ENCODE measurements at regions of chr22 and their contacts with region 1.

Region 1: DNA sequence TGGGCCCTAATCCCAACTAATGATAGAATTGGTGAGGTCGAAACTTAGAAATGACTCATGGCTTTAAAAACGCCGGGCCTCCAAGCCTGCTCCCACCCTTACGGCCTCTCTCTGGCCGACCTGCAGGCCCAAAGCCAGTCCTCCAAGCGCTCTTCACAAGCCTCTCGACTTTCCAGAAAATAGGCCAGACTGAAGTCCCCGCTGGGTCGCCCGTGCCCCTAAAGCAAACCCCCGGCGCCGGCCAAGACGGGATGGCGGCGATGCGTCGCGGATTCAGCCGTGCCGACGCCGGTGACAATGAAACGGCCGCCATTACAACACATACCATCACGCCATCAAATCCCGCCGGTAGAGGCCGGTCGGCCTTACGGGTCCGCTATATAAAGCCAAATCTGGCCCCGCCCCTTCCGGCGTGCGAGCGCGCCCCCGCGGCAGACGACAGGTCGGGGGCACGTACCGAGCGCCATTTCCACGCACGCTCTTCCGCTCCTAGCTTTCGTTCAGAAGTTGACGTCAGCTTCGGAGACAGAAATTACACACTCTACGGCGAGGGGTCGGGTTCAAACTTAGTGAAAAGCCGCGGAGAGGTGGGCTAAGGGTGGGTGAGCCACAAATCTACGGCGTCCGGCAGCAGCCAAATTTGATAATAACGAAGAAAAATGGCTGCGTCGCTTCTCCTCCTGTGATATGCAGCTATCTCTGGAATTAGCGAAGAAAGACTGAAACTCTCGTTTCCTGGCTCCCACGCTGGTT is at the start of gene RPL3:
- DNase-seq: peak; percentile 91
- H3K4me3 ChIP-seq: peak within 1 kb of the TSS; percentile 89
- CTCF ChIP-seq: no peak

Region 2: GRCh38 chr22:39135090-39135896 is 184.2 kb before region 1 on chr22:
- CTCF ChIA-PET with region 1: interaction called, 15 read pairs
- POLR2A ChIA-PET with region 1: interaction called, 3 read pairs
- DNase-seq: no peak
- H3K4me3 ChIP-seq: no peak overlapping the region
- CTCF ChIP-seq: peak; percentile 82

Region 3: GRCh38 chr22:39155421-39155820 is 164.0 kb before region 1 on chr22:
- CTCF ChIA-PET with region 1: interaction called, 26 read pairs
- POLR2A ChIA-PET with region 1: interaction called, 3 read pairs
- DNase-seq: no peak
- H3K4me3 ChIP-seq: no peak overlapping the region
- CTCF ChIP-seq: no peak

Region 4: DNA sequence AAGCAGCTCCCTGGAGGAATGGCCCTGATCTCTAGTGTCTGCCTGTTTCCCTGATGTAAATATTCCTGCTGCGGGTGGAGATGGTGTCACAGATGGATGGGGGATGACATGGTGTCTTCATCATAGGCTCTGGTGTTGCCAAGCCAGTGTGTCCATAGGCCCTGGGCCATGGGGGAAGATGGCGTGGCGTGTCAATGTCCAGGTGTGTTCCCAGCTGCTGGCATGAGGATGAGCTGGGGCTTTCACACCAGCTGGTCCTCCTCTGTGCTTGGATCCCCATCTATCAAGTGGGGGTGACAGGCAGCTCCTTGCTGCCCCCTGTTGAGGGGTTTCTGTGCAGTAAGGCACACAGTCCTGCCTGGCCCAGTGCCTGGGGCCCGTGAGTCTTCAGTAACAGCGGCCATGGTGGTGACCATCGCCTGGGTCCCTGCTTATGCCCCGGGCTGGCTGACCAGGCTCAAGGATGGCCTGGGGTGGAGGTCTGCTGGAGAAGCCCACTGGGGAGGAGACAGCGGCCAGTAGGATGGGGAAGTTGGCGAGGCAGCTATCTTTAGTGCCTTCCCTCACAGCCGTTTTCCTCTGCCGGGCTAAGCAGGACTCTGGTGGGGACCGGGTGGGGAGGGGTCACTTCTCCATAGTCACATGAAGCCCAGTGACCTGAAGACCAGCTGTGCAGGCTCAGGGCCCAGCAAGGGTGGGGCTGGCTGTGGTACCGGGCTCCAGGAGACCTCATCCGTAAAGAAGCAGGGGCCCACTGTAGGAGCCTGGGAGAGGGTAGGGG is 12.7 kb before region 1 on chr22:
- CTCF ChIA-PET with region 1: interaction called, 65 read pairs
- POLR2A ChIA-PET with region 1: interaction called, 57 read pairs
- DNase-seq: no peak
- H3K4me3 ChIP-seq: no peak overlapping the region
- CTCF ChIP-seq: peak; percentile 4

Region 5: GRCh38 chr22:39343259-39344048 is 24.0 kb after region 1 on chr22:
- CTCF ChIA-PET with region 1: interaction called, 7 read pairs
- POLR2A ChIA-PET with region 1: interaction called, 27 read pairs
- DNase-seq: no peak
- H3K4me3 ChIP-seq: no peak overlapping the region
- CTCF ChIP-seq: peak; percentile 88

Region 6: DNA sequence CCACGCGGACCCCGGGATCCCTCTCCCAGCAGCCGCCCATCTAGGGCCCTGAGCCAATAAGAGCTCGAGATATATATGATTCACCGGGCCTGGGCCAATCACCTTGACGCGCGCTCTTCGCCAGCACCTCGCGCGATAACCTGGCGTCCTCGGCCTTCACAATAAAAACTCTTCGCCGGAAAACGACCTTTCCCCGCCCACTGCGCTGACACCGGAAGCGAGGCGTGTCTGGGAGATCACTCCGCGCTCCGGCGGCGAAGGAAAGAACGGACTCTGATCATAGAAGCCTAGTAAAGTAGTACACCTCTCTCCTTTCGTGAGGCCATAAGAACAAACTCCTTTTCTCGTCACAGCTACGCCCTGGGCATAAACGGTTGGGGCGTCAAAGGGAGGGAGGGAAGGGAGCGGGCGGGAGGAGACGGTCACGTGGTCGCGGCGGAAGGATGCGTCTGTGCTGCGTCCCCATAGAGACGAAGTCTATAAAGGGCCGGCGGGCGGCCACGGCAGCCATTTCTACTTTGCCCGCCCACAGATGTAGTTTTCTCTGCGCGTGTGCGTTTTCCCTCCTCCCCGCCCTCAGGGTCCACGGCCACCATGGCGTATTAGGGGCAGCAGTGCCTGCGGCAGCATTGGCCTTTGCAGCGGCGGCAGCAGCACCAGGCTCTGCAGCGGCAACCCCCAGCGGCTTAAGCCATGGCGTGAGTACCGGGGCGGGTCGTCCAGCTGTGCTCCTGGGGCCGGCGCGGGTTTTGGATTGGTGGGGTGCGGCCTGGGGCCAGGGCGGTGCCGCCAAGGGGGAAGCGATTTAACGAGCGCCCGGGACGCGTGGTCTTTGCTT is 200.8 kb after region 1 on chr22 and contains the start of gene ATF4:
- CTCF ChIA-PET with region 1: interaction called, 84 read pairs
- POLR2A ChIA-PET with region 1: interaction called, 59 read pairs
- DNase-seq: peak; percentile 98
- H3K4me3 ChIP-seq: peak within 1 kb of the TSS; percentile 94
- CTCF ChIP-seq: no peak